Keratinocyte (primary cell): ENCODE measurements at regions of chr10 and their contacts with region 1.

Region 1: DNA sequence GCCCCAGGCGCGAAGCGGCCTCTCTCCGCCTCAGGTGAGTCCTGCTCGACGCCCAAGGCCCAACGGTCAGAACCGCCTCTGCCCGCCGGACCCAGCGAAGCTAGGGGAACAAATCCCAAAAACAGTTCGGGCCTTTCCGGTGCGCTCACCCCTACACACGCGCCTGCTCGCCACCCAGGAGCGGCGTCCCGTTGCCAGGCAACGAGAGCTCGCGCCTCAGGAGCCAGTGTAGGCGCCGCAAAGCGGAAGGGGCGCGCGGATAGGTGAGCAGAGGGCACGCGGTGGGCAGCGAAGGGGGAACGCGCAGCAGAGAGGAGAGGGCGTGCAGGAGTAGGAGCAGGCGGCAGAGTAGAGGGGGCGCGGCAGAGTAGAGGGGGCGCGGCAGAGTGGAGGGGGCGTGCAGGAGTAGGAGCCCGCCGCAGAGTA is at the starts of genes DYDC1 and DYDC2:
- DNase-seq: no peak
- H3K4me3 ChIP-seq: peak within 1 kb of the TSS; percentile 4 to 46 (median 25)
- H3K27ac ChIP-seq: no peak within 1 kb of the TSS
- H3K4me1 ChIP-seq: no peaks in the 10 kb centered on the region
- H3K27me3 ChIP-seq: peaks cover 11% of the 10 kb centered on the region
- CTCF ChIP-seq: no peak
- polyA plus RNA-seq, gene DYDC1: not detected in 3 replicates
- polyA plus RNA-seq, gene DYDC2: not detected in 3 replicates

Region 2: GRCh38 chr10:80260295-80261243 is 96.0 kb before region 1 on chr10:
- dilution Hi-C with region 1: loop called (anchors 25 kb)
- DNase-seq: no peak
- H3K4me3 ChIP-seq: no peak overlapping the region
- H3K27ac ChIP-seq: no peak overlapping the region
- H3K4me1 ChIP-seq: no peaks in the 10 kb centered on the region
- H3K27me3 ChIP-seq: peaks cover 2% of the 10 kb centered on the region
- CTCF ChIP-seq: peak; percentile 82 to 88 (median 86)